Aorta (tissue), 5 donors: ENCODE measurements at regions of chr1 and their contacts with region 1.

Region 1: GRCh38 chr1:232635778-232636356 is 5.9 kb upstream of the SIPA1L2 start:
- DNase-seq: no peak
- ATAC-seq: no peak
- H3K4me3 ChIP-seq: no peak overlapping the region
- H3K27ac ChIP-seq: no peak overlapping the region
- H3K4me1 ChIP-seq: no peaks in the 10 kb centered on the region
- H3K27me3 ChIP-seq: peaks cover 0 to 2% of the 10 kb centered on the region in 2 donors

Region 2: DNA sequence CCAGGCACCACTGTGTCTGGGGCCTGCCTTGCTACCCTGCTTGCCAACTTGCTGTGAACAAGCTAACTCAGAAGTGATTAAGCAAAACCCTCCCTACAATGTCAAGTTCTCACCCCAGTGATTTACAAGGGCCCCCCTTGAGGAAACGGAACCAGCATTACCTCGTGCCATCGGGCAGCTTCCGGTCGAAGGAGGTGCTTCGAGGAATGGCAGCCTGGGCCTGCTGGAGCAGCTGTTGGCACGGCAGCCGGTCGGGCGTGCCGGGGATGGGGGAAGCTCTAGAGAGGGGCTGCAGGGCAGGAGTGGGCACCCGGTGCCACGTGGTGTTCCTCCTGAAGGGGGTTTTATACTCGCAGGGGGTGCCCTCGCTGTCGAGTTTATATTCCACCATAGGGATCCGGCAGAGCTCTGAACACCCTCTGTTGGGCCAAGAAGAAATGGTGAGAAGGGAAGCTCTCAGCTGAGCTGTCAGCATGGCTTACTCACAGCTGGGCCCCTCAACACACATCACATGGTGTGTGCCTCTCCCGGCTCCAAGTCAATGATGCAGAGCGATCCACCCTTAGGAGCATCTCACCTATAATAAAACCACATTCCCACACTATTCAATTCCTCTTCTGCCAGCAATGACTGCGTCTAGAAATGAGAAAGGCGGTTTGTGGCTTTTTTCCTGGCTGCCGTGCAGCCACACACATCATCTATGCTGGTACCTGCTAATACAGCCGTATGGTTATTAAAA is 190.3 kb before region 1 on chr1:
- intact Hi-C with region 1: no loop called
- DNase-seq: no peak
- ATAC-seq: no peak
- H3K4me3 ChIP-seq: no peak overlapping the region
- H3K27ac ChIP-seq: no peak overlapping the region
- H3K4me1 ChIP-seq: no peaks in the 10 kb centered on the region
- H3K27me3 ChIP-seq: no peaks in the 10 kb centered on the region

Region 3: GRCh38 chr1:233240829-233241682 is 605.2 kb after region 1 on chr1:
- intact Hi-C with region 1: loop called in 1 of 2 experiments (anchors 2 kb)
- DNase-seq: peak; percentile 69 to 81
- ATAC-seq: peak; percentile 89
- H3K4me3 ChIP-seq: no peak overlapping the region
- H3K27ac ChIP-seq: no peak overlapping the region
- H3K4me1 ChIP-seq: no peaks in the 10 kb centered on the region
- H3K27me3 ChIP-seq: no peaks in the 10 kb centered on the region